Heart right ventricle (tissue), 16 donors: ENCODE measurements at regions of chr13 and their contacts with region 1.

Region 1: GRCh38 chr13:47499358-47500150 is 501.5 kb downstream of the SUCLA2 start:
- DNase-seq: no peak
- ATAC-seq: peak in 3 of 8 donors; percentile 17 to 33 (median 30)
- H3K4me3 ChIP-seq: no peak overlapping the region
- H3K27ac ChIP-seq: peak overlapping the region in 1 of 10 donors; percentile 46
- H3K4me1 ChIP-seq: peaks cover 0 to 25% (median 0%) of the 10 kb centered on the region in 9 donors
- H3K27me3 ChIP-seq: no peaks in the 10 kb centered on the region
- CTCF ChIP-seq: no peak

Region 2: DNA sequence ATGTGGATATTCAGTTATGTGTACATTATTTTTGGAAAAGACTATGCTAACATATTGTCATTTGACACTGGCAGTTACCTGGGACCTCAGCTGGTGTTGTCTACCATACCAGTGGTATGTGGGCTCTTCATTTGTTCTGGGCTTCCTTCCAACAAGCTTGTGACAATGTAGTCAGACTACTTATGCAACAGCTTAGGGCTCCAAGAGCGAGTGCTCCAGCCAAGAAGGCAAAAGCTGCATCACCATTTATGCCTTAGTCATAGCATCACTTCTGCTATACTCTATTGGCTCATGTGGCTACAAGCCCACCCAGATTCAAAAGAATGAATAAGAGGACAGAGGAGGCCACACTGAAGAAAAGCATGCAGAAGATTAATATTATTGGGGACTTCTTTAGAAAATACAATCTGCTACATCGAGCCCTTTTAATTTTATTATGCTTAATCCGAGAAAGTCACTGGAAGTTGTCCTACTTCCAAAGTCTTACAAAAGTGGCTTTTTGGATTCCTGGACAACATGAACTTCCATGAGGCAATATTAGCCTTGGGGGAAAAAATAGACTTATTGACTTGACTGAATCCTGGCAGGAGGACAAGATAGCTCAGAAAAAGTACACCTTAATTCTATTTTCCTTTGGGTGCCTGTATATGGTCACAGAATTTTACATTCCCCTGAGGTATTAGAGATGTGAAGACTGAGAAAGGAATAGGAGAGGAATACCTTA is 73.3 kb before region 1 on chr13:
- intact Hi-C with region 1: loop called in 1 of 10 experiments (anchors 10 kb)
- DNase-seq: peak in 1 of 2 donors; percentile 27
- ATAC-seq: peak in 7 of 8 donors; percentile 34 to 94 (median 84)
- H3K4me3 ChIP-seq: no peak overlapping the region
- H3K27ac ChIP-seq: no peak overlapping the region
- H3K4me1 ChIP-seq: peaks cover 0 to 9% (median 0%) of the 10 kb centered on the region in 9 donors
- H3K27me3 ChIP-seq: no peaks in the 10 kb centered on the region
- CTCF ChIP-seq: no peak

Region 3: DNA sequence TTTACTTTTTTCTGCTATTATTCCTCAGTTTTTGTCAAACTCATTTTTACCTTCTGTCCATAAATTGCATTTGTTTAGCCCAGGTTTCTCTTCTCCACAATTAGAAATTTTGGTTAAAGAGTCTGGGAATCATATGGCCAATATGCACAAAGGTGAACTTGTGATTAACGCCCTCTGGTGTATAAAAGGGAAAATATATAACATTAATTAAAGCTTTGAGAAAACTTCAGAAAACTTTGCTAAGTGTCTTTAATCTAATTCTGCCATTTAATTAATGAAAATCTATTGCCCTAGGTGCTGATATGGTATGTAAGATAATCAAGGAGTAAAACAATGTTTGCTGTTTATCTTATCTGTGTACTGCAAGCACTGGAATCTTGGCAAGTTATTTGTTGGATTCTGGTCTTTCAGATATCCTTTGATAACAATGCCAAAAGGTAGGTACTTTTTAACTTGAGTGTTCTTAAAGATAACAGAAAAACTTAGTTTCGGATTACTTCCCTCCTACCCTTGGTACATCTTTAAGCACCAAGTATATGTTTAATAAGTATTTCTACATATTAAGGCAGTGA is 98.9 kb after region 1 on chr13:
- intact Hi-C with region 1: no loop called
- DNase-seq: no peak
- ATAC-seq: no peak
- H3K4me3 ChIP-seq: no peak overlapping the region
- H3K27ac ChIP-seq: no peak overlapping the region
- H3K4me1 ChIP-seq: no peaks in the 10 kb centered on the region
- H3K27me3 ChIP-seq: no peaks in the 10 kb centered on the region
- CTCF ChIP-seq: peak in 7 of 9 donors; percentile 22 to 51 (median 36)

Region 4: GRCh38 chr13:47661076-47661475 is 161.5 kb after region 1 on chr13:
- intact Hi-C with region 1: no loop called
- DNase-seq: no peak
- ATAC-seq: no peak
- H3K4me3 ChIP-seq: no peak overlapping the region
- H3K27ac ChIP-seq: no peak overlapping the region
- H3K4me1 ChIP-seq: no peaks in the 10 kb centered on the region
- H3K27me3 ChIP-seq: no peaks in the 10 kb centered on the region
- CTCF ChIP-seq: no peak

Region 5: DNA sequence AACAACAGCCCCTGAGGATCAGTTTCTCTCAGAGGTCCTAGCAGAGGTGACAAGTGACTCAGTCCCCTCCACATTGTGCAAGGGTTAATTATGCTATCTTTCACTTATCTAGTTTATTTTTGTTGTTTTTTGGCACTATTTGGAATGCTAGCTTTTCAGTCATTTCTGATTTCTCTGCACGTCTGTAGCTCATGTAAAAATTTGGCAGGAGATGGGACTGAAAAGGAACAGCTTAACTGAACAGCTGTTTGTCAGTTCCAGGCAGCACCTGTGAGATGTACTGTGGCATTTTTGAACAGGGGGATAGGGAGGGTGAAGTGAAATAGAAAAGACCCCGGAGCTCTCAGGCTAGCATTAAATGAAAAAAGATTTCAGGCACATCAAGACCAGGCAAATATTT is 188.0 kb after region 1 on chr13:
- intact Hi-C with region 1: no loop called
- DNase-seq: no peak
- ATAC-seq: no peak
- H3K4me3 ChIP-seq: no peak overlapping the region
- H3K27ac ChIP-seq: no peak overlapping the region
- H3K4me1 ChIP-seq: no peaks in the 10 kb centered on the region
- H3K27me3 ChIP-seq: no peaks in the 10 kb centered on the region
- CTCF ChIP-seq: no peak